Activated naive CD4-positive, alpha-beta T cell treated with anti-CD3 and anti-CD28 coated beads for 36 hours (primary cell): ENCODE measurements at regions of chr1 and their contacts with region 1.

Region 1: DNA sequence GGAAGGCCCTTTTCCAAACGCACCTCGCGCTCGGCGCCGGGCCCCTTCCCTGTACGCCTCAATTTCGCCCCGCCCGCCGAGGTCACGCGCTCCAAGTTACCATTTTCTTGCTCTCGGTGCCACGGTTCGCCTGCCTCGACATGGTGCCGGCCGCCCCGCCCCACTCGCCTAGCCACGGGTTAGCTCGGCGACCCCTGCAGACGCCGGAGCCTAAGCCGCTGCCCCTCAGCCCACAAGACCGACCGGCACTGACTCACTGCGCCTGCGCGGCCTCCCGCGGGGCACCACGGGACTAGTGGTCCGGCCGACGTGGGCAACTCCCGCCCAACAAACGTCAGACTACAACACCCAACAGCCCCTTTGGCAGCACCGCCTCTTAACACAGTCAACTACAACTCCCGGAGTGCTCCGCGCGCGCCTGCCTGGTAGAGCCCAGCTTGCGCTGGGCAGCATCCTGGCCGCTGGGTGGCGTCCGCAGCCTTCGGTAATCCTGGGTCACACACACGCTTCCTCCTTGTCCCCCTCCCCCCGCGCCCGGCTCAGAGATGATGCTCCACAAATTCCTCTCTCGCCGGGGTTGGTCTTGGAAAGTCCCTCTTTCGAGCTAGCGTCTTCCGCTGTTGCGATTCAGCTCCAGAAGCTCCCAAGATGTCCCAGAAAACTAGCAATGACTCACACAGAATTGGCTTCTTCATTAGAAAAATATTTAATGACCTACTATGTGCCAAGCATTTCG is at the start of gene TRAPPC3:
- DNase-seq: peak; percentile 100
- H3K4me3 Mint-ChIP-seq: peak within 1 kb of the TSS; percentile 99
- H3K27ac Mint-ChIP-seq: peak within 1 kb of the TSS; percentile 88
- H3K4me1 Mint-ChIP-seq: peaks cover 67% of the 10 kb centered on the region
- H3K27me3 Mint-ChIP-seq: no peaks in the 10 kb centered on the region
- total RNA-seq, gene TRAPPC3: 35.9 to 37.6 TPM

Region 2: DNA sequence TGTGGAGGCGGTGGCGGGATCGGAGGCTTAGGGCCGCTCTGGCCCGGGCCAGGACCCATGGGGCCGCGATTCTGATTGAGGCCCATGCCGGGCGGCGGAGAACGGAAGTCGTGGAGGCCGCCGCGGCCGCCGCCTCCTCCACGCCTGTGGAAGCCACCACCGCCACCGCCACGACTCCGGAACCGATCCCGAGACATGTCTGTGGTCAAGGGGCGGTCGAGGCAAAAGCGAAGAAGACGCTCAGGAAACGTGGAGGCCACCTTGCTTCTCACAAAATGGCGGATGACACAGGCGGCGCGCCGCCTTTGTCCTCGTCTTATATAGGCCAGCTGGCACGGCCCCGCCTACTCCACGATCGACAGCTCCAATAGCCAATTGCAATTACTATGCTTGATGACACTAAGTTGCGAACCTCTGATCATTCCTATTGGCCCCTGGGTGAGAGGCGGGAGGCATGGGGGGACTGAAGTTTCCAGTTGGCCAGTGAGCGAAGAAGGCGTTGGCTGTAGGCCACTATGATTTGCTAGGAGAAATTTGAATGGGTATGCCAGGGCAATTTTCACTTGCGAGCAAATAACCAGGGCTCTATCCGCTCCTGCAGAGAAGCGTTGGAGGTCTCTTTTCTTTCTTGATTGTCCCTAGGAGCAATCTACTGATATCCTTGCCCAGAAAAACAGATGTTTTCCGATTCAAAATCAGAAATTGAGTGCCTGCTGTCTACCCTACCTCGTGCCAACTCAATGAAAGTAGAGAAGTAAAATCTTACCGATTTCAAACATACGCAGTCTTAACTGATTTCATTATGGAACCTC is 956.3 kb before region 1 on chr1 and contains the start of gene SFPQ:
- CTCF ChIA-PET with region 1: no interaction called
- intact Hi-C with region 1: loop called (anchors 10 kb)
- DNase-seq: peak; percentile 98
- H3K4me3 Mint-ChIP-seq: peak within 1 kb of the TSS; percentile 96
- H3K27ac Mint-ChIP-seq: peak within 1 kb of the TSS; percentile 98
- H3K4me1 Mint-ChIP-seq: peaks cover 39% of the 10 kb centered on the region
- H3K27me3 Mint-ChIP-seq: no peaks in the 10 kb centered on the region
- total RNA-seq, gene SFPQ: 260 to 269 TPM

Region 3: GRCh38 chr1:36088575-36089443 is 60.6 kb before region 1 on chr1 and contains the start of gene ADPRS:
- CTCF ChIA-PET with region 1: interaction called, 5 read pairs
- intact Hi-C with region 1: loop called (anchors 1 kb)
- DNase-seq: peak; percentile 92
- H3K4me3 Mint-ChIP-seq: peak within 1 kb of the TSS; percentile 87
- H3K27ac Mint-ChIP-seq: peak within 1 kb of the TSS; percentile 72
- H3K4me1 Mint-ChIP-seq: peaks cover 20% of the 10 kb centered on the region
- H3K27me3 Mint-ChIP-seq: peaks cover 21% of the 10 kb centered on the region
- total RNA-seq, gene ADPRS: 23.2 to 24.6 TPM

Region 4: GRCh38 chr1:36187800-36188593 is 38.6 kb after region 1 on chr1:
- CTCF ChIA-PET with region 1: interaction called, 89 read pairs
- intact Hi-C with region 1: loop called (anchors 1 kb)
- DNase-seq: peak; percentile 92
- H3K4me3 Mint-ChIP-seq: no peak overlapping the region
- H3K27ac Mint-ChIP-seq: peak overlapping the region; percentile 41
- H3K4me1 Mint-ChIP-seq: peaks cover 4% of the 10 kb centered on the region
- H3K27me3 Mint-ChIP-seq: no peaks in the 10 kb centered on the region

Region 5: DNA sequence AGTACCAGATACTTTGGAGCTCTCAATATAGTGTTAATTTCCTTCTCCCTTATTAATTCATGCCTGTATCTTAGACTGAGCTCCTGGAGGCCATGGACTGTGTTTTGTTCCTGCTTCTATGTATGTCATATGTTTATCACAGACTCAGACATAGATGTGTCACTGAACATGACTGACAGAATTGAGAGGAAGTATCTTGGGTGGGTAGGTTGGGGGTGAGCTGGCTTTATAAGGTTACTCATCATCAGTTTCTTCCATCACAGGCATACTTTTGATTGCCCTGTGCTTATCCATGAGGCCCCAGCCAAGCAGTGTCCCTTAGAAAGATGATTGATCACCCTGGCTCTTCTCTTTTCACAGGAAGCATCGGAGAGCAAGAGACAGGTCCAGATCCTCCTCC is 151.1 kb after region 1 on chr1:
- CTCF ChIA-PET with region 1: interaction called, 9 read pairs
- intact Hi-C with region 1: loop called (anchors 1 kb)
- DNase-seq: peak; percentile 39
- H3K4me3 Mint-ChIP-seq: no peak overlapping the region
- H3K27ac Mint-ChIP-seq: peak overlapping the region; percentile 77
- H3K4me1 Mint-ChIP-seq: peaks cover 64% of the 10 kb centered on the region
- H3K27me3 Mint-ChIP-seq: no peaks in the 10 kb centered on the region

Region 6: GRCh38 chr1:36385410-36386257 is 236.2 kb after region 1 on chr1 and contains the start of gene STK40:
- CTCF ChIA-PET with region 1: interaction called, 3 read pairs
- intact Hi-C with region 1: loop called (anchors 1 kb)
- DNase-seq: peak; percentile 99
- H3K4me3 Mint-ChIP-seq: peak within 1 kb of the TSS; percentile 92
- H3K27ac Mint-ChIP-seq: peak within 1 kb of the TSS; percentile 99
- H3K4me1 Mint-ChIP-seq: peaks cover 55% of the 10 kb centered on the region
- H3K27me3 Mint-ChIP-seq: no peaks in the 10 kb centered on the region
- total RNA-seq, gene STK40: 39.6 to 40.6 TPM

Region 7: DNA sequence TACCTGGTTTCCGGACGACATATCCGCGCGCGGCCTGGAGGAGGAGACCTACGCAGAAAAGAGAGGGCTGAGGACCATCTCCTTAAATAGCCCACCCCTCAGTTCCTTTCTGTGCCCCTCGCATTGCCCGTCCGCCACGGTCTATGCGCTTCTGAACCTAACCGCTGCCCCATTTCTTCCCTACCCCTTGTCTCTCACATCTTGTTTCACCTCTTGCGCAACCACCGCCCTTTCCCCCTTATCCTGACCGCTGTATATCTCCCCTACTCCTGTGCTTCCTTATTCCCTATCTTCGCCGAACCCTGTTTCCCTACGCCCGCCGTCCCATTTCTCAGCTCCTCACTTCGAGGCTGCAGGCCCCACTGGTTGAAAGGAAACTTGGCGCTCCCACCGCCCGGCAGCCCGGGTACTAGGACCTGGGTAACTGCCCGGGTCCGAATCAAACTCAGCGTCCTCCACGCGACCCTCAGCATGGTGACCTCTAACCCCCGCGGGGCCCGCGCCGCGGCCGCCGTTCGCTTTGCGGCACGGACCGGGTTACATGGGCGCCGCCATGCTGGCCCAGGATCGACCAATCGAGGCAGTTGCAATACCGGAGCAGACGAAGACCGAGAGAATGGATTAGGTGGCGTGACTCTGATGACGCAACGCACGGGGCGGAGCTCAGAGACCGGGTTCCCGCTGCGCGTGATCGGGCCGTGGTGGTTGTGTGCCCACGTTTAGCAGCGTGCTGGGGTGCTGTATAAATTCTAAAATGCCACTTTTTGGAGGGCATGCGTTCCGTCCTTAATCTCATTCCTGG is 314.6 kb after region 1 on chr1 and contains the start of gene MRPS15:
- CTCF ChIA-PET with region 1: no interaction called
- intact Hi-C with region 1: loop called (anchors 1 kb)
- DNase-seq: peak; percentile 98
- H3K4me3 Mint-ChIP-seq: peak within 1 kb of the TSS; percentile 99
- H3K27ac Mint-ChIP-seq: peak within 1 kb of the TSS; percentile 97
- H3K4me1 Mint-ChIP-seq: peaks cover 28% of the 10 kb centered on the region
- H3K27me3 Mint-ChIP-seq: no peaks in the 10 kb centered on the region
- total RNA-seq, gene MRPS15: 122 to 141 TPM